ENCODE measurements at regions of chr2 and their contacts with region 1.

Region 1: DNA sequence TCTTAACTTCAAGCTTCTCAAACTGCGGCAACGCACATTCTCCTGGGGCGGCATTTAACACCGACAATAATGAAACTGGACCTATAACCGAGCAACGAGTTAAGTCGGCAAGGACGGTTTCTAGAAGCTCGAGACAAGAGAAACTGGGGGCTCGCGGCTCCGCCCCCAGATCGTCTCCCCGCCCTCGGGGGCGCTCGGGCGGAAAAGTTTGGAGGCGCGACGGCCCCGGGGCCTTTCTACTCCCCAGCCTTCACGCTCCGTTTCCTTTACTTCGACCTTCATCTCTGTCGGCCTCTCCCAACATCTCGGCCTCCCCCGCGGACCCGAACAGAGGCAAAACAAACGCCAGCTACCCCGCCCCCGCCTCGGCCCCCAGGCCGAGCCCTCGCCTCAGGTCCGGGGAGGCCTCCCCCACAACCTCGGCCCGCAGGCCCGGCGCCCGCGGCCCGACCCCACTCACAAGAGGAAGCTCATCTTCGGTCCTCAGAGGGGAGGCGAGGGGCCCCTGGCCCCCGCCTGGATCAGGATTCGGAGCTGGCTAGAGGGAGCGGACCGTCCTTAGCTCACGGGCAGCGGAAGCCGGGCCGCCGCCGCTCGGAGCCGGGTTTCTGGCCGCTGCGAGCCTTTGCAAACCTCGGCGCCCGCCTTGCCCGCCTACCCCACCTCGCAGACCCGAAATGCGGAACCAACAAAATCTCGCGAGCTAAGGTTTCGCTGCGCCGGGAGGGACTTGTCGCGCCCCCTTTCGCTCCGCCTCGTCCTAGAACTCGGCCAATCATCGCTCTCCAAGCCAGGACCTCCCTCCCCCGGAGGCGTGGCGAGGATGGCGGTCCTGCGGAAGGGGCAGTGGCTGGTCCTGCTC is at the start of gene MOB1A:
- DNase-seq: peak; percentile 93
- ATAC-seq: peak; percentile 83
- H3K4me3 Mint-ChIP-seq: peak within 1 kb of the TSS; percentile 93
- H3K27ac Mint-ChIP-seq: peak within 1 kb of the TSS; percentile 98
- H3K4me1 Mint-ChIP-seq: peaks cover 60% of the 10 kb centered on the region
- H3K27me3 Mint-ChIP-seq: no peaks in the 10 kb centered on the region
- CTCF ChIP-seq: no peak
- total RNA-seq, gene MOB1A: 314 and 318 TPM in 2 replicates

Region 2: DNA sequence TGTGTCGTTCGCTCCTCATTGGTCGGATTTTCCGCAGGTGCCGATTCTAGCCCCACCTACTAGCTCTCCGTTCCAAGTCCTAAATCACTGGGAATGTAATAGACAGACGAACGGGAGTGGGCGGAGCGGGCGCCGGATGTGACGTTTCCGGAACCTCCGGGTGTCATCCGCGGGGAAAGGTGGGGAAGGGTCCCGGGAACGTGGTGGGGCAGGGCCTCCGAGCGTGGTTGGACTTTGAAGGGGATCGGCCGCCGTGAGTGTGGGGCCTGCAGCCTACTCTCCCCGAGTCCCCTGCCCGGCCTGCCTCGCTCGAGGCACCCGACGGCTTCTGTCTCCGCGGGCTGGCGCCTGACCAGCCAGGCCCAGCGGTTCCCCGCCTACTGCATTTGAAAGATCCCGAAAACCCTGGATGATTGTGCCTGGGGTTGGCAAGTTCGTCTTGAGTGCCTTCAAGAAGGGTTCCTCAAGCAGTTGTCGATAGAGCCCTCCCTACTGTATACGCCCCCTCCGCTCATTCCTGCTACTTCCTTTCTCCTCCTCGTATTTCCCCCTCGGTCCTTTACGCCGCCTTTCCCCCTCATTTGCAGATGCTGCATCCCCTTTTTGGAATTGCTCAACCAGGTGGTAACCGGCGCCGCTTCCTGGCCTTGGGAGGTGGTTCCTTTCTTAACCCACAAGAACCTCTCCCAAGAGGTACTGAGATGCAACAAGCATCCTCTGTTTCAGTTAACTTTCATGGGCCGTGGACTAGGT is 349.4 kb before region 1 on chr2 and contains the start of gene STAMBP:
- CTCF ChIA-PET with region 1: interaction called, 4 read pairs
- POLR2A ChIA-PET with region 1: interaction called, 24 read pairs
- intact Hi-C with region 1: no loop called
- DNase-seq: peak; percentile 80
- ATAC-seq: peak; percentile 92
- H3K4me3 Mint-ChIP-seq: peak within 1 kb of the TSS; percentile 98
- H3K27ac Mint-ChIP-seq: peak within 1 kb of the TSS; percentile 96
- H3K4me1 Mint-ChIP-seq: peaks cover 41% of the 10 kb centered on the region
- H3K27me3 Mint-ChIP-seq: no peaks in the 10 kb centered on the region
- CTCF ChIP-seq: no peak
- total RNA-seq, gene STAMBP: 32.2 and 35.4 TPM in 2 replicates

Region 3: DNA sequence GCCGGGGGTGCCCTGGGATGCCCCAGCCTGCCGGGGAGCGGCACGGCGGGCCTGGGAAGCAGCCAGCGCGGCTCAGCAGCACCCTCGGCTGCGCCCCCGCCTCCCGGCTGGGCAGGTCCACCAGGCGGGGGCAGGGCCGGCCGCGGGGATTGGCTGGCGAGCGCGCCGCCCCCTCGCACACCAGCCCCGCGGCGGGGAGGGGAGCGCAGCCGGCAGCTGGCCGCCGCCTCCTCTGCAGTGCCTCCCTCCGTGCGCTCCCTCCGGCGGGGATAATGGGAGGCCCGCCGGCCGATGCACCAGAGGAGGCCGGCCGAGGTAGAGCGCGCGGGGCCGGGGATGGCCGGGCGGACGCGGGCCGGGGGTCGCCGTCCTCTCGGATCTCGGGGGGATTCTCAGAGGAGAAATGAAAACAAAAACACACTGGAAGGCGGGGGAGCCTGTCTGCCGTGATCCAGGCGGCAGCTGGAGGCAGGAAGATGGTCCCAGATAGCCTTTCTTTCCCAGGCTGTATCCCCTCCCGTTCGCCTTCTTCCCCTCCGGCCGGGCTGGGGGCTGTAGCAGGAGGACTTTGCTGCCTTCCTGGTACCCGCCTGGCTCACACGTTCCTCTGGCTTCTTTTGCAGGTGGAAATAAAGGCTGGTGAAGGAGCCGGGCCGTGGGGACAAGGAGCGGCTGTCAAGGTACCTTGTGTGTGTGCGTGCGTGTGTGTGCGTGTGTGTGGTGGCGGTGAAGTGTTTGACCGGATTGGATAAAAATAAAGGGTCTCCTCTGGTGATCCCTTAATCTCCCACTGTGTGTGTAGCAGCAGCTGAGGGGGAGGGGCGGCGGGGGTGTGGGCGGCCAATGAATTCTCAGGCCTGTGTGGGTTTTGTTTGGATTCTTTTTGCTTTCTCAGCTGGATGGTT is 175.7 kb before region 1 on chr2:
- CTCF ChIA-PET with region 1: no interaction called
- POLR2A ChIA-PET with region 1: interaction called, 4 read pairs
- intact Hi-C with region 1: loop called (anchors 1 kb)
- DNase-seq: peak; percentile 78
- ATAC-seq: peak; percentile 91
- H3K4me3 Mint-ChIP-seq: peak overlapping the region; percentile 82
- H3K27ac Mint-ChIP-seq: peak overlapping the region; percentile 50
- H3K4me1 Mint-ChIP-seq: peaks cover 73% of the 10 kb centered on the region
- H3K27me3 Mint-ChIP-seq: no peaks in the 10 kb centered on the region
- CTCF ChIP-seq: no peak

Region 4: DNA sequence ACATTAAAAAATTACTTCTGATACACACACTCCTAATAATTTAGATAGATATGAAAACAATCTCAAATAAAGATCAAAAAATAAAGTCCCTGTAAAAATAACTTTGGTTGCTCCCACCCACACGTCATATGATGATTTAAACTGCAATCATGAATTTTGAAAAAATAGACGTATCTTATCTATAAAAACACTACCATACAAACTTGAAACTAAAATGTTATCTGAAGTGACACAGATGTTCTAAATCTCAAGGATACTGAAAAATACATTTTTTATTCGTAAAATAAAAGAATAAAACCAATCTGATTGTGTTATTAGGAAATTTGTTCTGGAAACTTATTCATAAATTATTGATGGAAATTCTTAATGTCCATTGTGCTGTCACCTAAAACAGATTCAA is 22.6 kb before region 1 on chr2:
- CTCF ChIA-PET with region 1: interaction called, 8 read pairs
- POLR2A ChIA-PET with region 1: interaction called, 24 read pairs
- intact Hi-C with region 1: loop called (anchors 2 kb)
- DNase-seq: no peak
- ATAC-seq: no peak
- H3K4me3 Mint-ChIP-seq: no peak overlapping the region
- H3K27ac Mint-ChIP-seq: no peak overlapping the region
- H3K4me1 Mint-ChIP-seq: peaks cover 15% of the 10 kb centered on the region
- H3K27me3 Mint-ChIP-seq: no peaks in the 10 kb centered on the region
- CTCF ChIP-seq: no peak

Region 5: GRCh38 chr2:74198461-74199274 is 20.2 kb after region 1 on chr2 and contains the start of gene MTHFD2:
- CTCF ChIA-PET with region 1: interaction called, 45 read pairs
- POLR2A ChIA-PET with region 1: interaction called, 723 read pairs
- intact Hi-C with region 1: loop called (anchors 1 kb)
- DNase-seq: peak; percentile 87
- ATAC-seq: peak; percentile 87
- H3K4me3 Mint-ChIP-seq: peak within 1 kb of the TSS; percentile 99
- H3K27ac Mint-ChIP-seq: peak within 1 kb of the TSS; percentile 100
- H3K4me1 Mint-ChIP-seq: peaks cover 34% of the 10 kb centered on the region
- H3K27me3 Mint-ChIP-seq: no peaks in the 10 kb centered on the region
- CTCF ChIP-seq: peak; percentile 50
- total RNA-seq, gene MTHFD2: 135 and 150 TPM in 2 replicates

Region 6: GRCh38 chr2:74458132-74458925 is 279.9 kb after region 1 on chr2 and contains the start of gene WBP1:
- CTCF ChIA-PET with region 1: no interaction called
- POLR2A ChIA-PET with region 1: interaction called, 13 read pairs
- intact Hi-C with region 1: loop called (anchors 5 kb)
- DNase-seq: peak; percentile 87
- ATAC-seq: peak; percentile 81
- H3K4me3 Mint-ChIP-seq: peak within 1 kb of the TSS; percentile 99
- H3K27ac Mint-ChIP-seq: peak within 1 kb of the TSS; percentile 100
- H3K4me1 Mint-ChIP-seq: peaks cover 62% of the 10 kb centered on the region
- H3K27me3 Mint-ChIP-seq: no peaks in the 10 kb centered on the region
- CTCF ChIP-seq: no peak
- total RNA-seq, gene WBP1: 61.4 and 65.3 TPM in 2 replicates

Measured in activated B cell treated with CpG ODN at 0.5 μM for 24 hours (primary cell).